Activated CD8-positive, alpha-beta T cell treated with anti-CD3 and anti-CD28 coated beads for 36 hours (primary cell): ENCODE measurements at regions of chr17 and their contacts with region 1.

Region 1: DNA sequence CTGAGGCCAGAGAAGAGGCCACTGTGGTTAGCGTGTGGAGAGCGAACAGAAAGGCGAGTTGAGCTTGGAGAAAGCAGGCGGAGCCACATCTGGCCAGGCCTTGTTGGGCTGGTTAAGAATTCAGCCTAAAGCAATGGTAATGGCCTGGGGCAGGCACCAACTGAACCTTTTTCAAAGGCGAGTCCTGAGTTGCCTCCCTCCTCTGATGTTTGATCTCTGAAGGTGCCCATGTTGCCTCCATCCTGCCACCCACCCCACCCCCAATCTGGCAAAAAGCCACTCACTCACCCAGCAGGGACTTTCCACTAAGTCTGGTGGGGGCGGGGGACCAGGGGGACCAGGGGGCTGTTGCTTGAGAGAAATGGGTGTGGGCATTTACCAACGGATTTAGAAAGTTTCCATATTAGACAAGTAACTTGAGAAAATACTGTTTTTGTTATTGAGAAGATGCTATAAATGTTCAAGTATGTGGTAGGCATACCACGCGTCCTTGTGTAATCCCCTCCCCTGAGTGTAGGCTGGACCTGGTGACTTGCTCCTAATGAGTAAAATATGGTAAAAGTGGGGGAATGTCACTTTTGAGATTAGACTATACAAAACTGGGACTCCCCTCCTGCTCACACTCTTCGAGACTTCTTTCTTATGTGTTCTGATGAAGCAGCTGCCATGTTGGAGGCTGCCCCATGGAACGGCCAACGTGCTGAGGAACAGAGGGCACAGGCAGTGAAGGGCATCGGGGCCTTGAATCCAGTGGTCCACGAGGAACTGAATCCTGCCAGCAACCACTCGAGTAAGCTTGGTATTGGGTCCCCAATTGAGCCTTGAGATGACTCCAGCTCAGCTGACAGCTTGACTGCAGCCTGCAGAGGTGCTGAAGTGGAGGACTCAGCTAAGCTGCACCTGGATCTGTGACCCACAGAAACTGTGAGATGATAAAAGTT is 29.9 kb upstream of the TNS4 start:
- DNase-seq: peak; percentile 94
- ATAC-seq: peak; percentile 68
- H3K4me3 Mint-ChIP-seq: peak overlapping the region; percentile 73
- H3K27ac Mint-ChIP-seq: peak overlapping the region; percentile 95
- H3K4me1 Mint-ChIP-seq: peaks cover 70% of the 10 kb centered on the region
- H3K27me3 Mint-ChIP-seq: no peaks in the 10 kb centered on the region
- CTCF ChIP-seq: no peak

Region 2: GRCh38 chr17:40303009-40303657 is 228.2 kb before region 1 on chr17:
- CTCF ChIA-PET with region 1: interaction called, 10 read pairs
- POLR2A ChIA-PET with region 1: no interaction called
- intact Hi-C with region 1: no loop called
- DNase-seq: peak; percentile 63
- ATAC-seq: peak; percentile 59
- H3K4me3 Mint-ChIP-seq: no peak overlapping the region
- H3K27ac Mint-ChIP-seq: no peak overlapping the region
- H3K4me1 Mint-ChIP-seq: peaks cover 28% of the 10 kb centered on the region
- H3K27me3 Mint-ChIP-seq: no peaks in the 10 kb centered on the region
- CTCF ChIP-seq: peak; percentile 76

Region 3: DNA sequence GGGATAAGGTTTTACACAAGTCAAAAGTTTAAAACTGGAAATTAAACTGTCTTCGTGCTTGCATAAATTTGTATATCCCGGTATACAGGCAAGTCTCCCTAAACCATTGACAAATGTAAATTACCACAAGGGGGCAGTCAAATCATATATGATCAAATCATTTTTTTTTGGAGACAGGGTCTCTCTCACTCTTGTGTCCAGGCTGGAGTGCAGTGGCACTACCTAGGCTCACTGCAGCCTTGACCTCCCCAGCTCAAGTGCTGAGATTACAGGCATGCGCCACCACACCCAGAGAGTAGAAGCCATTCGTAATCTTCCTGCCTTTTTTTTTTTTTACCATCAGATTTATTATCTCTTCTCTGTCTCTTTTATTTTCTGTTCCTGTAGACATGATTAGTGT is 132.1 kb before region 1 on chr17:
- CTCF ChIA-PET with region 1: interaction called, 27 read pairs
- POLR2A ChIA-PET with region 1: interaction called, 3 read pairs
- intact Hi-C with region 1: no loop called
- DNase-seq: no peak
- ATAC-seq: peak; percentile 49
- H3K4me3 Mint-ChIP-seq: no peak overlapping the region
- H3K27ac Mint-ChIP-seq: no peak overlapping the region
- H3K4me1 Mint-ChIP-seq: peaks cover 6% of the 10 kb centered on the region
- H3K27me3 Mint-ChIP-seq: no peaks in the 10 kb centered on the region
- CTCF ChIP-seq: peak; percentile 67

Region 4: GRCh38 chr17:40433551-40434415 is 97.5 kb before region 1 on chr17:
- CTCF ChIA-PET with region 1: interaction called, 97 read pairs
- POLR2A ChIA-PET with region 1: no interaction called
- intact Hi-C with region 1: no loop called
- DNase-seq: peak; percentile 43
- ATAC-seq: peak; percentile 82
- H3K4me3 Mint-ChIP-seq: no peak overlapping the region
- H3K27ac Mint-ChIP-seq: no peak overlapping the region
- H3K4me1 Mint-ChIP-seq: peaks cover 15% of the 10 kb centered on the region
- H3K27me3 Mint-ChIP-seq: no peaks in the 10 kb centered on the region
- CTCF ChIP-seq: peak; percentile 52

Region 5: DNA sequence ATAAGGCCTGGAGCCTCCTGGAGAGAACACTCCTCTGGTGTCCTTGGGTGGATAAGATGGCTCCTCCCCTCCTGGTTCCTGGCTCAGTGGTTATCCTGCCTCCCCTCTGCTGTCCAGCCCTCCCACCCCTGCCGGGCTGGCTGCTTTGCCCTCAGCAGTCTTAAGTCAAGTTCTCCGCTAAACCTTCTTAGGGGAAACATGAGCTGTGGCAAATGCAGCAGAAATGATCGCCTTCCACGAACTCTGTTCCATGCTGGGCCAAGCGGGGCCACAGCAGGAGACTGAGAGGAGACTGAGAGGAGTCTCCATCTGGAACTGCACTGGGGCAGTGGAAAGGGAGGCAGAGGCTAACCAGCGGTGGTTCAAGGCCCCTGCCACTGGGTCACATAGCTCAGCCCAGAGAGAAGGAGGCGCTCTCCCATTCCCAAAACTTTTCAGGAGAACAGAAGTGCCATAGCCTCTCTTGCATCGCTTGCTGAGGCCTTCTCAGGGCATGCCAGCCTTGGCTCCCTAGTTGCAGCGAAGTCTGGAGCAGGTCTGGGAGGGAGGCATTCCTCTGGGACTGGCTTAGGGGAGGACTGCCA is 56.8 kb before region 1 on chr17:
- CTCF ChIA-PET with region 1: interaction called, 158 read pairs
- POLR2A ChIA-PET with region 1: interaction called, 30 read pairs
- intact Hi-C with region 1: no loop called
- DNase-seq: no peak
- ATAC-seq: no peak
- H3K4me3 Mint-ChIP-seq: no peak overlapping the region
- H3K27ac Mint-ChIP-seq: no peak overlapping the region
- H3K4me1 Mint-ChIP-seq: peaks cover 16% of the 10 kb centered on the region
- H3K27me3 Mint-ChIP-seq: no peaks in the 10 kb centered on the region
- CTCF ChIP-seq: no peak

Region 6: DNA sequence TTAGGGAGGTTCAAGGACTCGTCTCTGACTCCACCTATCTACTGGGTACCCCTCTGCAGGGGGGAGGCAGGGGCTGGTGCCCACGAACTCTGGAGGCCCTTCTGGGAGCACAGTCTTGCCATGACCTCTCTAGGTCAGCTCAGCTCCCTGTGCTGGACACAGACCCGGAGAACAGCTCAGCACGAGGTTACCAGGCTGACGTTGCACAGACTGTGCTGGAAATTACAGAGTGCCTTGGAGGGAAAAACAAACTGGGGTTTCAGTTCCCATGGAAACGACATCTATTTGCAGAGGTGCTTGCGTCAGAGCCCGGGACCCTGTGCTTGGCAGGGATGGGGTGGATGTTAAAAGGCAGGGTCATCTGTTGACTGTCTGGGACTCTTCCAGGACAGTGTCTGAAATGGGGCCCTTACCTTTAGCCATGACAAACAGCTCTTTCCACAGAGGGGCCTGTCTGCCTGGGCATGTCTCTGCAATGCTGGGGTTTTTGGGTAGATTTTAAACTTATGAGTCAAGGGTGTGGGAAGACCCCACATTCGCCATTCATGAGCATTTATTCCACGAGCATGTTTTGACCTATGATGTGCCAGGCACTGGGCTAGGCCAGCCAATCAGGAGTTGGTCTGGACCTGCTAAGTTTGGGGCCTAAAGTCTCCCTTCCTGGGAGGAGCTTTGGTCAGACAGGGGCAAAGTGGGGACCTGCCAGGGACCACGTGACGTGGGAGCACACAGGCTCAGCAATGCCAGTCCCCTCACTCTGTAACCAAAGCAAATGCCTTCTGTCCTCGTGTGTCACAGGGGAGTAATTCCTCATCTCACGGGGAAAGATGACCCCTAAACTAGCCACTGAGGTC is 11.5 kb after region 1 on chr17:
- CTCF ChIA-PET with region 1: interaction called, 31 read pairs
- POLR2A ChIA-PET with region 1: interaction called, 548 read pairs
- intact Hi-C with region 1: no loop called
- DNase-seq: peak; percentile 91
- ATAC-seq: peak; percentile 60
- H3K4me3 Mint-ChIP-seq: peak overlapping the region; percentile 71
- H3K27ac Mint-ChIP-seq: peak overlapping the region; percentile 93
- H3K4me1 Mint-ChIP-seq: peaks cover 91% of the 10 kb centered on the region
- H3K27me3 Mint-ChIP-seq: no peaks in the 10 kb centered on the region
- CTCF ChIP-seq: no peak

Region 7: DNA sequence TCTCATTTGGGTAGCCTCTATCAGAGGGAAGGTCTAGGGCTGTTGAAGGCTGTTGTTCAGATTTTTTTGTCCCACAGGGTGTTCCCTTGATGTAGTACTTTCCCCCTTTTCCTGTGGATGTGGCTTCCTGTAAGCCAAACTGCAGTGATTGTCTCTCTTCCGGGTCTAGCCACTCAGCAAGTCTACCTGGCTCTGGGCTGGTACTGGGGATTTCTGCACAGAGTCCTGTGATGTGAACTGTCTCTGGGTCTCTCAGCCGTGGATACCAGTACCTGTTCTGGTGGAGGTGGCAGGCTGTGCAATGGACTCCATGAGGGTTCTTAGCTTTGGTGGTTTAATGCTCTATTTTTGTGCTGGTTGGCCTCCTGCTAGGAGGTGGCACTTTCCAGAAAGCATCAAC is 57.2 kb after region 1 on chr17:
- CTCF ChIA-PET with region 1: no interaction called
- POLR2A ChIA-PET with region 1: no interaction called
- intact Hi-C with region 1: no loop called
- DNase-seq: no peak
- ATAC-seq: no peak
- H3K4me3 Mint-ChIP-seq: no peak overlapping the region
- H3K27ac Mint-ChIP-seq: peak overlapping the region; percentile 57
- H3K4me1 Mint-ChIP-seq: peaks cover 69% of the 10 kb centered on the region
- H3K27me3 Mint-ChIP-seq: no peaks in the 10 kb centered on the region
- CTCF ChIP-seq: no peak

Region 8: DNA sequence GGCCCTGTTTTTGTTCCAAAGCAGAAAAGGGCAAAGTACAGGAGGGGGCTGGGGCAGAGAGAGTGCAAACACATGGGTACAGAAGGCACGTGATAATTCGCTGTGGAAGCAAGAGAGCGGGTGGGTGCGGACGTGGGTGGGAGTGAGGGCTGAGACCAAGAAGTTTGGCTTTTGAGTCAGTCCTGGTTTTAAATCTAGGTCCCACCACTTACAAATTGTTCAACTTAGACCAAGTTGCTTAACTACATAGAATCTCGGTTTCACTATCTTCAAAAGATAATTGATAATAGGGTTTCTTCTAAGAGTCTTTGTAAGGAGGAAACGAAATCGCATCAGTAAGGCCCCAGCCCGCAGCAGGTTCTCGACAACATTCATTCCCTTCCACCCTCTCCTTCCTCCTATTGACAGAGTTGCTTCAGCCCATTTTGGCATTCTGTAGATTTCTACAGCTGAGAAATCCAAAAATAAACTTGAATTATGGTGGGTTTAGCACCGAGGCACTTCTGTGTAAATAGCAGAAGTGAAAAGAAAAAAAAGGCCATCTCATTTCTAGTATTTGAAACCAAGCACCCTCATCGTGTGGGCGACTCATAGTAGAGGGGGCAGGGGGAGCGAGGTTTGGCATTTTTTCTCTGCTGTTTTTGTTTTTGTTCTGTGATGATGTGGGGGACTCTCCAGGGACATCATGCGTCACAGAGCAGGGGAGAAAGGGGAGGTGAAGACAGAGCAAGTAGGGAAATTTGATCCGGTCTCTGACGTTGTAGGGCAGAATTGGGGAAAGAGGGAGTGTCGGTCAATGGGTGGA is 67.5 kb after region 1 on chr17:
- CTCF ChIA-PET with region 1: interaction called, 10 read pairs
- POLR2A ChIA-PET with region 1: no interaction called
- intact Hi-C with region 1: no loop called
- DNase-seq: peak; percentile 94
- ATAC-seq: peak; percentile 60
- H3K4me3 Mint-ChIP-seq: peak overlapping the region; percentile 54
- H3K27ac Mint-ChIP-seq: peak overlapping the region; percentile 99
- H3K4me1 Mint-ChIP-seq: peaks cover 95% of the 10 kb centered on the region
- H3K27me3 Mint-ChIP-seq: no peaks in the 10 kb centered on the region
- CTCF ChIP-seq: no peak

Region 9: DNA sequence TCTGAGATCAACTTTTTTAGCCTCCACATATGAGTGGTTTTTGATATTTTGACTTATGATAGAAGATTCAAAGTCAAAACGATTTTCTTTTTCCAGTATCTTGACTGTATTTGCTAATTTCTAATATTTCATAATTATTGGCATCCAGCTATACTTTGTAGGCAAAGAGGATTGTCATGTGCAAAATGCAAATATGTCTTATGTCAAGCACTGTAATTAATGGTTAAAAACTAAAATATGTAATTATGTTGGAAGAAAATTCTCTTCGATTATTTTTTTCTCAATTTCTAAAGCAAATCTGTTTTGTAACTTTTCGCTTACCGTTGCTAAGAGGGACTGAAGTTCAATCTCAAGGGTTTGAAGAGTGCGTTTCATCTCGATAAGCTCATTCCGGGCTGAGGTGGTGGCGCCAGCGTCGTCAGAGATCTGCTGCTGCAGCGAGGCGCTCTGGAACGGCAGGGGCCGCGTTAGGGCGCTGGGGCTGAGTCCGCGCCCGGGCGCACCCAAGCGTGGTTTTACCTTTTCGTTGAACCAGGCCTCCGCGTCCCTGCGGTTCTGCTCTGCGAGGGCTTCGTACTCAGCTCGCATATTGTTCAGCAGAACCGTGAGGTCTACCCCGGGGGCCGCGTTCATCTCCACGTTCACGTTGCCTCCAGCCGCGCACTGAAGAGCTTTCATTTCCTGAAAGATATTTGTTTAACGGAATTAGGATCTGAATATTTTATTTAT is 248.0 kb after region 1 on chr17:
- CTCF ChIA-PET with region 1: no interaction called
- POLR2A ChIA-PET with region 1: no interaction called
- intact Hi-C with region 1: no loop called
- DNase-seq: peak; percentile 23
- ATAC-seq: no peak
- H3K4me3 Mint-ChIP-seq: peak overlapping the region; percentile 16
- H3K27ac Mint-ChIP-seq: no peak overlapping the region
- H3K4me1 Mint-ChIP-seq: no peaks in the 10 kb centered on the region
- H3K27me3 Mint-ChIP-seq: peaks cover 41% of the 10 kb centered on the region
- CTCF ChIP-seq: no peak